ENCODE measurements at regions of chr16 and their contacts with region 1.

Region 1: GRCh38 chr16:8572919-8573724 is 17.2 kb downstream of the TMEM114 start:
- DNase-seq: peak in 1 of 2 donors; percentile 78
- H3K4me3 ChIP-seq: no peak overlapping the region
- CTCF ChIP-seq: no peak
- POLR2A ChIP-seq: no peak

Region 2: GRCh38 chr16:8611886-8612600 is 38.9 kb after region 1 on chr16:
- intact Hi-C with region 1: no loop called
- DNase-seq: no peak
- H3K4me3 ChIP-seq: no peak overlapping the region
- CTCF ChIP-seq: no peak
- POLR2A ChIP-seq: no peak

Region 3: DNA sequence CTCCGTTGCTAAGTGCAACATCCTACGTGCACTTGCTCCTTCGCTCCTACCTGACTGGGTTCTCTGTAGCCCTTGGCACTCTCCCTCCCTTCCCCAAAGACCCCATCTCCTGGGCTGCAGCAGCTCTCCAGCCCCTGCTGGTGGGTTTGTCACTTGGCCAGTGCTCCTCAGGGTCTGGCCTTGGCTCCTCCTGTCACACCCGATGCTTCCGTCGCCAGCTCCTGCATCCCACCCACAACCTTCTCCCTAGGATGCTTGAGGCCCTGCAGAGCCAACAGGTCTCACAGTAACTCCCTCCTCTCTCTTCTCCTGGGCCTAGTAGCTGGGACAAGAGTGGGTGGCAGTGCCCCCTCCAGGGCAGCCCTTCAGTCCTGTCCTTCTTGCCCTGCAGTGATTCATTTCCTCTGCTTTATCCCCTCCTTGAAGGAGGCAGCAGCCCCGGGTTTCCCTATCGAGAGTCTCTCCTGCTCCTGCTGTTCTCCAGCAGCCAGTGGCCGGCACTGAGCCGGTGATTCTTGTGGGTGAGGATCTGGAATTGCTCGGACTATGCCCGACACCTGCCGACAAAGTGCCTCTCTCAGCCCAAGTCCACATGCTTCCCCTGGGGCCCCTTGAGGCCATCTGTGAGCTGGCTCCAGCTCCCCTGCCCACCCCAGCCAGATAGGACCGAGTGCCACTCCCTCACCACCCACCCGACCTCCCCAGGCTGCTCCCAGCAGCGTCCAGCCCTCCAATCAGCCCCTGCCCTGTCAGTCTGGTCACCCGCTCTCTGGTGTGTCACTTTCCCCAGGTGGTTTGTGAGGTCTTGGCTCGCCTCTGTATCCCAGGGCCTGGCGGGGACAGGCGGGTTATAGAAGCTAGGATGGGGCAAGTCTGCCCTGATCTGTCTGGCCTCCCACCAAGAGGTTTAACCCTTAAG is 312.8 kb after region 1 on chr16:
- intact Hi-C with region 1: loop called (anchors 10 kb)
- DNase-seq: no peak
- H3K4me3 ChIP-seq: no peak overlapping the region
- CTCF ChIP-seq: no peak
- POLR2A ChIP-seq: no peak

Measured in lower leg skin (tissue), 4 donors.